CD14-positive monocyte (primary cell): ENCODE measurements at regions of chr17 and their contacts with region 1.

Region 1: GRCh38 chr17:78214706-78215061 is 631 bp downstream of the BIRC5 start:
- DNase-seq: no peak
- H3K4me3 ChIP-seq: peak overlapping the region in 2 of 3 experiments; percentile 68 to 80
- H3K4me3 Mint-ChIP-seq: peak overlapping the region; percentile 70 to 78
- H3K27ac ChIP-seq: no peak overlapping the region
- H3K27ac Mint-ChIP-seq: peak overlapping the region in 3 of 7 donors; percentile 78 to 89 (median 87)
- H3K4me1 ChIP-seq: peaks cover 13 to 23% of the 10 kb centered on the region in 2 donors
- H3K4me1 Mint-ChIP-seq: peaks cover 16% of the 10 kb centered on the region
- H3K27me3 ChIP-seq: no peaks in the 10 kb centered on the region
- H3K27me3 Mint-ChIP-seq: peaks cover 0 to 2% (median 0%) of the 10 kb centered on the region in 3 donors
- CTCF ChIP-seq: no peak

Region 2: GRCh38 chr17:78197147-78197832 is 17.4 kb before region 1 on chr17:
- intact Hi-C with region 1: loop called in 1 of 2 experiments (anchors 2 kb)
- DNase-seq: no peak
- H3K4me3 ChIP-seq: no peak overlapping the region
- H3K4me3 Mint-ChIP-seq: peak overlapping the region in 1 of 2 donors; percentile 15
- H3K27ac ChIP-seq: peak overlapping the region; percentile 84 to 91
- H3K27ac Mint-ChIP-seq: peak overlapping the region; percentile 95 to 99 (median 98)
- H3K4me1 ChIP-seq: peaks cover 28 to 30% of the 10 kb centered on the region in 2 donors
- H3K4me1 Mint-ChIP-seq: peaks cover 21% of the 10 kb centered on the region
- H3K27me3 ChIP-seq: no peaks in the 10 kb centered on the region
- H3K27me3 Mint-ChIP-seq: no peaks in the 10 kb centered on the region
- CTCF ChIP-seq: no peak

Region 3: DNA sequence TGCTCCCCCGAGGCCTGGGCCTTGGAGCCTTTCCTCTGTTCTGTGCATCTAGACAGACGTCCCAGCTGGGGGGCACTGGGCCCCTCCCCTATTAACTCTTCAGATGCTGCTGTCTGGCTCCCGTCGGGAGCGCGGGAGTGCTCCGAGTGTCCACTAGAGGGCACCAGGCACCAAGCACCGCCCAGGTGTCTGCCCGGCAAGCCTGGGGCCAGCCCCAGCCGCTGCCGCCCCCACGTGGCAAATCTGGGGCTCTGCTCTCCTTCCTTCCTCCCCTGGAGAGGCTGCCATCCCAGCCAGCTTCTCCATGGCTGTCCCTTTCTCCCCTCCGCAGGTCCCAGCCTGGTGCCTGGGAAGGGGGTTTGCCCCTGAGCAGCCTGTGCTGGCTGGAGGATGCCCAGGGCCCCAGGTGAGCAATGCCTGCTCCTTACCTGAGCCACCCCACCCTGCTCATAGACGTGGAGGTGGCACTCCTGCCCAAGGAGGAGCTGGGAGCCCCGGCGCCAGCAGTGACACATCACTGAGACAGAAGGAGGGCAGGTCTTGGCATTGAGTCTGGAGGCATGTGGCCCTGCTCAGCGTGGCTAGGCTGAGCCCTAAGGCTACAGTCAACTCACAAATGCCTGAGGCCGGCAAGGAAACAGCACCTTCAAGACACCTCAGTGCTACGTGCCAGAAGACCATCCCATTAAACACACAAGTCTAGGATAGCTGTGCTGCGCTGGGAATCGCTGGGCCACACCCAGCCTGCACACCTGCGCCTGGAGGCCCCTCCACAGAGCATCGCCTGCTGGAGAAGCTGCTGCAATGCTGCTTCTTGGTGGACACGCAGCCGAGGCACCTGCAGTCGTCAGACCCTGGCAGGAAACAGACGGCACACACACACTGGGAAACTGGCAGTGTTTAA is 36.5 kb after region 1 on chr17:
- intact Hi-C with region 1: loop called (anchors 5 kb)
- DNase-seq: peak; percentile 83 to 88 (median 87)
- H3K4me3 ChIP-seq: no peak overlapping the region
- H3K4me3 Mint-ChIP-seq: peak overlapping the region in 1 of 2 donors; percentile 39
- H3K27ac ChIP-seq: no peak overlapping the region
- H3K27ac Mint-ChIP-seq: peak overlapping the region in 3 of 7 donors; percentile 30 to 80 (median 57)
- H3K4me1 ChIP-seq: peaks cover 20 to 31% of the 10 kb centered on the region in 2 donors
- H3K4me1 Mint-ChIP-seq: peaks cover 21% of the 10 kb centered on the region
- H3K27me3 ChIP-seq: peaks cover 0 to 10% of the 10 kb centered on the region in 2 donors
- H3K27me3 Mint-ChIP-seq: peaks cover 7 to 10% (median 8%) of the 10 kb centered on the region in 3 donors
- CTCF ChIP-seq: peak; percentile 100